WTC11 (cell line): ENCODE measurements at regions of chr20 and their contacts with region 1.

Region 1: GRCh38 chr20:13261460-13262301 is 40.6 kb downstream of the ISM1 start:
- DNase-seq: peak; percentile 78
- ATAC-seq: peak; percentile 99
- H3K4me3 Mint-ChIP-seq: no peak overlapping the region
- H3K27ac Mint-ChIP-seq: no peak overlapping the region
- H3K4me1 Mint-ChIP-seq: no peaks in the 10 kb centered on the region
- H3K27me3 Mint-ChIP-seq: no peaks in the 10 kb centered on the region
- CTCF ChIP-seq: peak; percentile 81

Region 2: GRCh38 chr20:13117200-13117599 is 144.5 kb before region 1 on chr20:
- CTCF ChIA-PET with region 1: interaction called, 12 read pairs
- POLR2A ChIA-PET with region 1: no interaction called
- DNase-seq: no peak
- ATAC-seq: no peak
- H3K4me3 Mint-ChIP-seq: no peak overlapping the region
- H3K27ac Mint-ChIP-seq: no peak overlapping the region
- H3K4me1 Mint-ChIP-seq: peaks cover 7% of the 10 kb centered on the region; the same call in 1 of the 2 replicates
- H3K27me3 Mint-ChIP-seq: no peaks in the 10 kb centered on the region; the same call in 1 of the 2 replicates
- CTCF ChIP-seq: no peak

Region 3: DNA sequence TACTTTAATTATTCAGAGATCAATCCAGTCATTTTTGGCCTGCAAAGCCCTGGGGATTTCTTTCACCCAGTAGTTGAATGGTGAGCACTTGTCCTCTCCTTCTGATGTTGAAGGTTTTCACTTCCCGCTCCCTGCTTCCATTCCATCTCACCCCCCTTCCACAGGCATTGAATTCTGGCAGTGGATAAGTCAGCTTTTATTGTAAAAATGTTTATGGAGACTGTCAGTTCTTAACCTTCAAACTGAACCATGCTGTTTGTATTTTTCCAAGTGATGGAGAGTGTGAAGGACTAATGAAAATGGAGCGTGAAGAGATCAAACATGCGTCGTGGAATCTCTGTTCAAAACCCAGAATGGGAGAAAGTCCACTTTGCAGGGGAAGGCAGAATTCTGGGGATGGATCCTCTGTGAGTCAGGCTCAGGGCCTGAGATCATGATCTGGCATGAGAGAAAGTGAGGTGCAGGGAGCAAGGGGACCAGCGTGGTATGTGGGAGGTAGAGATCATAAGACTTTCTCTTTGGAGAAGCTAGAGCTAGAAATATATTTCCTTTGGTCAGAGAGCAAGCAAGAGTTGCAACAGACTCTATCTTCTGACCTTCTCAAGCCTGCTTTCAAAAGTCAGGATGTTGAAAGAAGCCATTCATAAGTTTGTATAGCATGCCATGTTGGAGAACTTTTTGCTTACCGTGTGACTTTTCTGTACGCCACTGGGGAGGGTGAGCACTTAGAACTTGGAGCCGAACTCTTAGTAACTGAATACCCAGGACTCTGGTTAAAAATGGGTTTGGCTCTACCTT is 10.4 kb before region 1 on chr20:
- CTCF ChIA-PET with region 1: interaction called, 13 read pairs
- POLR2A ChIA-PET with region 1: no interaction called
- DNase-seq: no peak
- ATAC-seq: no peak
- H3K4me3 Mint-ChIP-seq: no peak overlapping the region
- H3K27ac Mint-ChIP-seq: no peak overlapping the region
- H3K4me1 Mint-ChIP-seq: peaks cover 10% of the 10 kb centered on the region
- H3K27me3 Mint-ChIP-seq: no peaks in the 10 kb centered on the region
- CTCF ChIP-seq: no peak

Region 4: GRCh38 chr20:13274275-13274861 is 12.7 kb after region 1 on chr20:
- CTCF ChIA-PET with region 1: interaction called, 17 read pairs
- POLR2A ChIA-PET with region 1: no interaction called
- DNase-seq: peak; percentile 68
- ATAC-seq: peak; percentile 93
- H3K4me3 Mint-ChIP-seq: peak overlapping the region; percentile 14; the same call in 1 of the 2 replicates
- H3K27ac Mint-ChIP-seq: peak overlapping the region; percentile 26; the same call in 1 of the 2 replicates
- H3K4me1 Mint-ChIP-seq: peaks cover 13% of the 10 kb centered on the region
- H3K27me3 Mint-ChIP-seq: no peaks in the 10 kb centered on the region; the same call in 1 of the 2 replicates
- CTCF ChIP-seq: no peak

Region 5: GRCh38 chr20:13632431-13632830 is 370.8 kb after region 1 on chr20:
- CTCF ChIA-PET with region 1: no interaction called
- POLR2A ChIA-PET with region 1: no interaction called
- DNase-seq: no peak
- ATAC-seq: no peak
- H3K4me3 Mint-ChIP-seq: no peak overlapping the region
- H3K27ac Mint-ChIP-seq: peak overlapping the region; percentile 26; the same call in 1 of the 2 replicates
- H3K4me1 Mint-ChIP-seq: peaks cover 14% of the 10 kb centered on the region
- H3K27me3 Mint-ChIP-seq: no peaks in the 10 kb centered on the region
- CTCF ChIP-seq: no peak